Activated CD8-positive, alpha-beta memory T cell treated with anti-CD3 and anti-CD28 coated beads, Interleukin-2, amount 10 ng/mL, durations not matched to agents 7 days and 5 days (primary cell): ENCODE measurements at regions of chr3 and their contacts with region 1.

Region 1: GRCh38 chr3:15332405-15333098 is at the start of gene SH3BP5:
- DNase-seq: peak; percentile 79
- ATAC-seq: peak; percentile 96
- H3K4me3 Mint-ChIP-seq: peak within 1 kb of the TSS; percentile 83
- H3K27ac Mint-ChIP-seq: peak within 1 kb of the TSS; percentile 77
- H3K4me1 Mint-ChIP-seq: peaks cover 50% of the 10 kb centered on the region
- H3K27me3 Mint-ChIP-seq: no peaks in the 10 kb centered on the region
- total RNA-seq, gene SH3BP5: 19.4 to 30.3 TPM

Region 2: DNA sequence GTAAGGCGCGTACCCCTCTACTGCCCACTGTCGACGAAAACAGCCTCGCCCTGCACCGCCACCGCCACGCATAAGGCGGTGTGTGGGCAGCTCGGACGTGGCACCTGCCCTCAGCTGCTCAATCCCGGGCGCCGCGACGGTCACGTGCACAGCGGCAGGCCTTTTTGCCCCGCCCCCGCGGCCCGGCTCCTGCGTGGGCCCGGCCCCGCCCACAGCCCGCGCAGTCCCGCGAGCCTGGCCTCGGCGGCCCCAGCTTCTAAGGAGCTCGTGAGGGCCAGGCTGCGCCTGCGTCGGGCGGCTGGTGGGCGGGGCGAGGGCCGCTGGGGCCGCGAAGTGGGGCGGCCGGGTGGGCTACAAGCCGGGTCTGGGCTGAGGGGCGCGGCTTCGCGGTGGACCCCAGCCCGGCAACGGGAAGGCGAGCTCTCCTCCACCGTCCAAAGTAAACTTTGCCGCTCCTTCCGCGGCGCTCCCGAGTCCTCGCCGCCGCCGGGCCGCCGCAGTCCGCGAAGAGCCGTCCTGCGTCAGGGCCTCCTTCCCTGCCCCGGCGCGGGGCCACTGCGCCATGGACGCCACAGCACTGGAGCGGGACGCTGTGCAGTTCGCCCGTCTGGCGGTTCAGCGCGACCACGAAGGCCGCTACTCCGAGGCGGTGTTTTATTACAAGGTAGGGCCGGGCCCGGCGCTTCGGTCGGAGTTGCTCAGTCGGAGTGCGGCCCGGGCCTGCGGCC is 126.5 kb before region 1 on chr3 and contains the start of gene CAPN7:
- CTCF ChIA-PET with region 1: interaction called, 18 read pairs
- DNase-seq: peak; percentile 95
- ATAC-seq: peak; percentile 93
- H3K4me3 Mint-ChIP-seq: peak within 1 kb of the TSS; percentile 81
- H3K27ac Mint-ChIP-seq: peak within 1 kb of the TSS; percentile 85
- H3K4me1 Mint-ChIP-seq: peaks cover 26% of the 10 kb centered on the region
- H3K27me3 Mint-ChIP-seq: no peaks in the 10 kb centered on the region
- total RNA-seq, gene CAPN7: 28.1 to 28.4 TPM

Region 3: DNA sequence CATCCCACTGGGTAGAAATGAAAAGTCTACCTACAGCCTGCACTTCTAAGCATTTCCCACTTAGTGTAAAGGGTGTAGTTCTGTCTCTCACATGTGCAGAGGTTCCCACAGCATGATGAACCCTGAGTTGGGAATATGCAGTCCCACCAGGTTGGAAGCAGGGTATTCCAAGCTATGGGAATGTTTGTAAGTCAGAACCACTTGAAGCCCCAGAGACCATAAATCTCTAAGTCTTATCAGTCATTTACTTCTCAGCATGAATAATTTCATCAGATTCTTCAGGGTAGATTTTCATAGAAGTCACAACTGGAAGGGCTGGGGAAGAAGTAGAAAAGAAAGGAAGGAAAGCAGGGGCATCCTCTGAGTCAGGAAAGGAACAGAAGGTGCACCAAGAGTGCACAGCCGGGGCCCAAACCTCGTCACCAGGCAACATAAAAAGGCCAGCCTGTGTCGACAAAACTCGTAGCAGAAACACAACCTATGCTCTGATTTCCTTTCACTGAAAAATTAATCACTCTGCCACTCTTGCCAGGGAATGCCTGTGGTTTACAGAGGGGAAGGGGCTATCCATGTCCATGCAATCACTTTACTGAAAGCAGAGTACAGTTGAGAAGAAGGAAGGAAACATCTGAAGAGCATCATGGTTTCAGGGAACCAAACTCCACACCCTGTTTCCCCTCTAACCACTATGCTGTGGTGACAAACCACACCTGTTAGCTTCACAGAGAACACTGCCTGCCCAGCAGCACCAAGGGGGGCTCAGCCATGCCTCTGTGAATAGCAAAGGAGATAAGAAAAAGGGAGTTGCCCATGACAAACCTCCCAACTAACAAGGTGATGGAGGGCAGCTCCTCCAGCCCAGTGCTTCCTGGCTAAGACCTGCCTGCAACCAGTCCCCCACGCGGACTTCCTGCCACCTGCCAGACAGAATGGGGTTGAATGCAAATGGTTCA is 40.7 kb before region 1 on chr3:
- CTCF ChIA-PET with region 1: interaction called, 17 read pairs
- DNase-seq: peak; percentile 90
- ATAC-seq: peak; percentile 91
- H3K4me3 Mint-ChIP-seq: peak overlapping the region; percentile 58
- H3K27ac Mint-ChIP-seq: peak overlapping the region; percentile 92
- H3K4me1 Mint-ChIP-seq: peaks cover 73% of the 10 kb centered on the region
- H3K27me3 Mint-ChIP-seq: no peaks in the 10 kb centered on the region

Region 4: GRCh38 chr3:15319575-15319974 is 13.0 kb before region 1 on chr3:
- CTCF ChIA-PET with region 1: interaction called, 18 read pairs
- DNase-seq: no peak
- ATAC-seq: no peak
- H3K4me3 Mint-ChIP-seq: no peak overlapping the region
- H3K27ac Mint-ChIP-seq: no peak overlapping the region
- H3K4me1 Mint-ChIP-seq: peaks cover 35% of the 10 kb centered on the region
- H3K27me3 Mint-ChIP-seq: no peaks in the 10 kb centered on the region

Region 5: GRCh38 chr3:15356186-15356585 is 23.6 kb after region 1 on chr3:
- CTCF ChIA-PET with region 1: interaction called, 17 read pairs
- DNase-seq: no peak
- ATAC-seq: no peak
- H3K4me3 Mint-ChIP-seq: peak overlapping the region; percentile 23
- H3K27ac Mint-ChIP-seq: peak overlapping the region; percentile 82
- H3K4me1 Mint-ChIP-seq: peaks cover 46% of the 10 kb centered on the region
- H3K27me3 Mint-ChIP-seq: no peaks in the 10 kb centered on the region